Activated CD8-positive, alpha-beta T cell treated with anti-CD3 and anti-CD28 coated beads, Interleukin-2, amount 10 ng/mL, durations not matched to agents 7 days and 5 days (primary cell): ENCODE measurements at regions of chr2 and their contacts with region 1.

Region 1: GRCh38 chr2:230225486-230225885 is at the start of gene SP140:
- DNase-seq: peak; percentile 85
- ATAC-seq: peak; percentile 89
- H3K4me3 Mint-ChIP-seq: peak within 1 kb of the TSS; percentile 80
- H3K27ac Mint-ChIP-seq: peak within 1 kb of the TSS; percentile 90
- H3K4me1 Mint-ChIP-seq: peaks cover 79% of the 10 kb centered on the region
- H3K27me3 Mint-ChIP-seq: no peaks in the 10 kb centered on the region
- total RNA-seq, gene SP140: 57.5 to 58.3 TPM

Region 2: DNA sequence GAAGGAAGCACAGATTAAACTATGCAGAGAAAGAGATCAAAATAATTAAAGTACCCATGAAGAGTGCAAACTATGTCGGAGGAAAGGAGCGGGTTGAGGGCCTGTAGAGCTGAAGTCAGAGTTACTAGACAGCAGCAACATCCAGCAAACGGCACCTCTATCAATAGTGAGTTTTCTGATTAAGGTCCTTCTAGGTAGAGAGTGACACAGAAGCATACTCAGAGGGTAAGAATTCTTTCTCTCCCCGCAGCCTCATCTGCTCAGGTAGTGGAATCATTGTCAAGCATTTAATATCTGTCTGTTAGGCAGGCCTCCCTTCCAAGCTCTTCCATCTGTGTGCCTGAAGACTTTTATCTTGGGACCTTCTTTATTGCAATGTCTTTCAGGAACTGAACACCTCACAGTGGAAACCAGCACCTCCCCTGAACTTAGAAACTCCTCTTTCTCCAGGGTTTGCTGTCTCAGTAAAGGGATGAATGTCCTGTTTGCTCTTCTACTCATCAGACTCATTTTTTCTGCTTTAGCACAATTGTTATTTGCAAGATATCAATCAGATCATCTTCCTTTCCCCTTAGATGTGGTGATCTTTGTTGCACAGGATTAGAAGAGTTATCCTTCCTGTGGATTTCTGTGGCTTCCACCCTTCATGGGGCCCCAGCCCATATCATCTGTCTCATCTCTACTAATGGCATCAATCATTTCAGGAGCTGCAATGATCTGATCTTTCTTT is 28.8 kb after region 1 on chr2:
- CTCF ChIA-PET with region 1: interaction called, 4 read pairs
- POLR2A ChIA-PET with region 1: interaction called, 15 read pairs
- DNase-seq: peak; percentile 48
- ATAC-seq: peak; percentile 77
- H3K4me3 Mint-ChIP-seq: no peak overlapping the region
- H3K27ac Mint-ChIP-seq: no peak overlapping the region
- H3K4me1 Mint-ChIP-seq: peaks cover 19% of the 10 kb centered on the region
- H3K27me3 Mint-ChIP-seq: no peaks in the 10 kb centered on the region

Region 3: DNA sequence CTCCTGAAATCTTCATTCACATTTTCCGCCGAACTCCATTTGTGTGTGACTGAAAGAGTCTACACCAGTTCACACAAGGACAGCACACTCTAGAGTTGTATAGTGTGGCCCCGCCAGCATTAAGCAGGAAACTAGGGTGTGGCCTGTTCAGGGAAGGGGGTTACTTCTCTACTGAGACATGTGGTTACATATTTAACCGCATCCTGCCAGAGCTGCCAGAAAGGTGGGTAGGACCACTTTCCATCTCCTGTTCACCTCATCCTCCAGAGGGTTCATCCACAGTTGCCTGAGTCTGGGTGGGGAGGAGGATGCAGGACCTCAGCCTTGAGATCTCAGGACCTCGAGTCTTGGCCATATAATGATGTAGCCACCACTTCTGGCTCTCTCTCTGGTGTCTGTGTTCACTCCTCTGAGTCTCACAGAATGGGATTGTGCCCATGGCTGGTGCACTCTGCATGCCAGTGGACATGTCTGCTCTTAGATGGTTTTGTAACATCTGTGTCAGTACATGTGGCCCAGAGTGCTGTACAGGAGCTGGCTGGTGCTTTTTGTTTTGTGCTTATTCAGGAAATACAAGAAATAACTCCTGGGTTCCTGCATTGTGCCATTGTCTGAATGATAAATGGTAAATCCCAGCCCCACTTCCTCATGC is 93.9 kb after region 1 on chr2:
- CTCF ChIA-PET with region 1: interaction called, 3 read pairs
- POLR2A ChIA-PET with region 1: interaction called, 30 read pairs
- DNase-seq: peak; percentile 93
- ATAC-seq: peak; percentile 94
- H3K4me3 Mint-ChIP-seq: peak overlapping the region; percentile 60
- H3K27ac Mint-ChIP-seq: peak overlapping the region; percentile 91
- H3K4me1 Mint-ChIP-seq: peaks cover 66% of the 10 kb centered on the region
- H3K27me3 Mint-ChIP-seq: no peaks in the 10 kb centered on the region